Astrocyte of the cerebellum (primary cell): ENCODE measurements at regions of chr5 and their contacts with region 1.

Region 1: DNA sequence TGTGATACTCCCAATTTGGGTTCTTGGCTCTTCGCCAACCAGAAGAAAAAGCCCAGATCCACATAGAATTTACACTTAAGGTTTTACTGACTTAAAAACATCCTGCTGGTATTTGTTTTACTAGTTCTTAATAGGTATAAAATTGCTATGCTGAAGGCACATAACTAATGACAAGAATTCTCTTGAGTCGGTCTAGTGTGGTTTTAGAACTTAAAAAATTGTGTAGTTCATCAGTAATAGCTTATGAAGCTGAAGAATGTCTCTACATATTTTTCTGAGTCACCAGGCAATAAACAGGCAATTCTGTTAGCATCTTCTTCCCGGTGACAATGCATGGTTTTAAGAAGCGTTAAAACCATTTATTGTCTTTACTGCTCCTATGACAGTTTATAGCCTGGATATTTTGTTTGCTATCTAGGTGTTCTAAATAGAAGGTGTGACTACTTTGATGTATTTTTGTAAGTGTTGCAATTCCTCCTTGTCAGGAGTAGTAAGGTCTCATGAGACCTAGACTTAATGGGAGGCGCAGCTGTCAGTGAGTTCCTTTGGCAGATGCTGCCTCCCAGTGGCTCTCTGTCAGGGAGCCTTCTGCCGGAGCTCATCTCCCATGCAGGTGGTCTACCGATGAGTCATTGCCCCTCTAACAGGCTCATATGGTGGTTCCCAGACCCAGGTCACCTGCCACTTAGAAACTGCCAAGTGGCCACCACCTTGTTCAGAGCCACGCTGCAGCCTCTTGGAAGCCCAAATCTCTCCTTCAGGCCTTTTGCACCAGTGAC is 173.8 kb downstream of the MAST4 start:
- DNase-seq: no peak
- H3K4me3 ChIP-seq: no peak overlapping the region
- CTCF ChIP-seq: peak; percentile 41

Region 2: GRCh38 chr5:66306105-66306843 is 463.8 kb before region 1 on chr5:
- in situ Hi-C with region 1: loop called (anchors 10 kb)
- DNase-seq: peak; percentile 63
- H3K4me3 ChIP-seq: no peak overlapping the region
- CTCF ChIP-seq: peak; percentile 98

Region 3: GRCh38 chr5:66814146-66814991 is 44.3 kb after region 1 on chr5:
- in situ Hi-C with region 1: no loop called
- DNase-seq: peak; percentile 49
- H3K4me3 ChIP-seq: no peak overlapping the region
- CTCF ChIP-seq: peak; percentile 80